ENCODE measurements at regions of chr2 and their contacts with region 1.

Region 1: GRCh38 chr2:16069933-16070647 is 129.7 kb downstream of the MYCN start:
- DNase-seq: peak; percentile 72 to 97 (median 91)

Region 2: DNA sequence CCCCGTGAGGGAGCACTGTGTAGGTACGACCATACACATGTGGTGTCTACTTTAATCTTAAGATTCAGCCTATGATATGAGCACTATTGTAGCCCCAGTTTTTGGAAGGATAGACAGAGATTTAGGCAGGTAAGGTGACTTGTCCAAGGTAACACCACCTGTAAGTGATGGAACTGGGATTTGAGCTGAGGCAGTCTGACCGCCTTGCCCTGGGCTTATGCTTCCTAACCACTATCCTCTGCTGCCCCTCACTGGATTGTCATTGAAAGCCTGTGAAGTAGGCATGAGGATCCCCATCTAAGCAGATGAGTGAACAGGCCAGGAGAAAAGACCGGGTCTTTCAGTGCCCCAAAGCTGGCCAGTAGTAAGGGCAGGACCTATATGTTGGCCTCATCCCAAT is 251.8 kb after region 1 on chr2:
- intact Hi-C with region 1: loop called (anchors 5 kb)
- DNase-seq: peak in 22 of 42 donors; percentile 19 to 75 (median 42)